Activated CD4-positive, alpha-beta T cell treated with anti-CD3 and anti-CD28 coated beads for 36 hours (primary cell): ENCODE measurements at regions of chr7 and their contacts with region 1.

Region 1: GRCh38 chr7:131879424-131879823 is 323.0 kb upstream of the PODXL start:
- DNase-seq: no peak
- ATAC-seq: no peak
- H3K4me3 Mint-ChIP-seq: no peak overlapping the region
- H3K27ac Mint-ChIP-seq: no peak overlapping the region
- H3K4me1 Mint-ChIP-seq: no peaks in the 10 kb centered on the region
- H3K27me3 Mint-ChIP-seq: peaks cover 3% of the 10 kb centered on the region

Region 2: GRCh38 chr7:131859147-131859821 is 20.1 kb before region 1 on chr7:
- CTCF ChIA-PET with region 1: interaction called, 11 read pairs
- POLR2A ChIA-PET with region 1: no interaction called
- intact Hi-C with region 1: no loop called
- DNase-seq: peak; percentile 69
- ATAC-seq: peak; percentile 74
- H3K4me3 Mint-ChIP-seq: no peak overlapping the region
- H3K27ac Mint-ChIP-seq: no peak overlapping the region
- H3K4me1 Mint-ChIP-seq: no peaks in the 10 kb centered on the region
- H3K27me3 Mint-ChIP-seq: peaks cover 9% of the 10 kb centered on the region

Region 3: DNA sequence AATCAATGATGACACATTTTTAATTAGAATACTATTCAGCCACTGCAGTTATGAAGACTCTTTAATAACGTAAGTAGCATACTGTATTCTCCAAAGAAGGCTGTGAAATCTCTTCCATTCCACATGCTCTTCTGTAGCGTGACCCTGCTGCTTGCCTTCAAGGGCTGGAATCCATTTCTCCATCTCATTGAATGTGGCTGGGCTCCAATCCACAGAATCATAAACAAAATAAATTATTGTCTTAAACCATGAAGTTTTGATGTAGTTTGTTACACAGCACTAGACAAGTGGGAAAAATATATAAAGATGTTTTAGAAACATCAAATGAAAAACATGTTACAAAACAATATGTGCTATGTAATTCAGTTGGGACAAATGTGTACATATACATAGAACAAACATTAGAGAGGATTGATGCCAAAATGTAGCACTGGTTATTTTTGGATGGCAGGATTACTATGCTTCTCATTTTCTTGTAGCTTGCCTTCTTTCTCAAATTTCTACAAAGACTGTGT is 87.8 kb after region 1 on chr7:
- CTCF ChIA-PET with region 1: no interaction called
- POLR2A ChIA-PET with region 1: no interaction called
- intact Hi-C with region 1: no loop called
- DNase-seq: no peak
- ATAC-seq: no peak
- H3K4me3 Mint-ChIP-seq: no peak overlapping the region
- H3K27ac Mint-ChIP-seq: no peak overlapping the region
- H3K4me1 Mint-ChIP-seq: no peaks in the 10 kb centered on the region
- H3K27me3 Mint-ChIP-seq: peaks cover 9% of the 10 kb centered on the region